IMR-90 (cell line): ENCODE measurements at regions of chr17 and their contacts with region 1.

Region 1: DNA sequence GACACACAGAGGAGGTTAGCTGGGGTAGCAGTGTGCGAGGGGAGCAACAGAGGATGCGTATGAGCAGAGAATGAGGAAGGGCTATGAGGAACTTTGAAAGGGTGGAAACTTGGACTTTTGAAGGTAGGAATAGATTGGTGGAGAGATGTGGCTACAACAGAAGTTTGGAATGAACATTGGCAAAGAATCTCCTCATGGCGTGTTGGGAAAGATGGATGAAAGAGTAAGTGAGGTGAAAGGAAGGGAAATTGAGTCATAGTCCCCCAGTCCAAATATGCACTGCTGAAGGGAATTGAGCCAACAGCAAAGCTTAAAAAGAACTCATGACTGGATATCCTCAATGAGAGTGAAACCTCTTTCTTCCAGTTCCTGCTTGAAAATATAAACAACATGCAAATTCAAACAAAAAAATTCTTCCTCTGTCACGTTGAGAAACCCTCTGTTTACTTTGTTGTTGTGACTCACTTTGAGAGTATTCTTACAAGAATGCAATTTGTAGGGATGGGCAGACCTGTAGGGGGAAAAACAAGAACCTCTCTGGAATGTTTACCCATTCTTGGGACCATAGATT is 313.2 kb upstream of the KCNJ16 start:
- DNase-seq: peak; percentile 99
- ATAC-seq: peak; percentile 80
- H3K4me3 ChIP-seq: no peak overlapping the region
- H3K27ac ChIP-seq: peak overlapping the region; percentile 99
- H3K4me1 ChIP-seq: peaks cover 20% of the 10 kb centered on the region
- H3K27me3 ChIP-seq: no peaks in the 10 kb centered on the region
- CTCF ChIP-seq: 0 out of 2 replicates have a peak, but pooled peaks have one; percentile 4
- POLR2A ChIP-seq: no peak; the same call in 1 of the 2 replicates
- RAD21 ChIP-seq: no peak

Region 2: GRCh38 chr17:69592692-69593350 is 169.0 kb before region 1 on chr17:
- CTCF ChIA-PET with region 1: no interaction called
- POLR2A ChIA-PET with region 1: no interaction called
- dilution Hi-C with region 1: no loop called
- in situ Hi-C with region 1: no loop called
- intact Hi-C with region 1: loop called (anchors 5 kb)
- DNase-seq: peak; percentile 93
- ATAC-seq: peak; percentile 94
- H3K4me3 ChIP-seq: no peak overlapping the region
- H3K27ac ChIP-seq: peak overlapping the region; percentile 99
- H3K4me1 ChIP-seq: peaks cover 16% of the 10 kb centered on the region
- H3K27me3 ChIP-seq: no peaks in the 10 kb centered on the region
- CTCF ChIP-seq: no peak
- POLR2A ChIP-seq: no peak
- RAD21 ChIP-seq: no peak

Region 3: DNA sequence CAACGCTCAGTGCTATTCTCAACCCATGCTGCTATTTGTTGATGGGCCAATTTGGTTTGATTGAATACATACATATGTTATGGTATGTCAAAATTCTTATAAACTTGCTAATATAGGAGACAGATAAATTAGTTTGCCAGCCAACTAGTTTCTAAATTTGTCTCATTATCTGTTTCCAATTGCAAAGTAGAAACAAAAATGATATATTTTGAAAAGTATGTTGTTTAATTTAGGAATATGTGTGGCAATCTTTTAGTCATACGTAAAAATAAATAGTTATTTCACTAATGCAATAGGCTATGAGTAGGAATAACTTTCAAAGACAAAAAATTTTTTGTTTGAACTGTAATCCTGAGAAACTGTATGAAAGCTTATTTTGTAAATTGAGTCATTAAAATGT is 102.6 kb after region 1 on chr17:
- CTCF ChIA-PET with region 1: no interaction called
- POLR2A ChIA-PET with region 1: no interaction called
- dilution Hi-C with region 1: no loop called
- in situ Hi-C with region 1: no loop called
- intact Hi-C with region 1: loop called (anchors 2 kb)
- DNase-seq: peak; percentile 60
- ATAC-seq: peak; percentile 84
- H3K4me3 ChIP-seq: no peak overlapping the region
- H3K27ac ChIP-seq: peak overlapping the region; percentile 27; the same call in 1 of the 2 replicates
- H3K4me1 ChIP-seq: peaks cover 13% of the 10 kb centered on the region
- H3K27me3 ChIP-seq: no peaks in the 10 kb centered on the region
- CTCF ChIP-seq: no peak
- POLR2A ChIP-seq: no peak
- RAD21 ChIP-seq: no peak

Region 4: DNA sequence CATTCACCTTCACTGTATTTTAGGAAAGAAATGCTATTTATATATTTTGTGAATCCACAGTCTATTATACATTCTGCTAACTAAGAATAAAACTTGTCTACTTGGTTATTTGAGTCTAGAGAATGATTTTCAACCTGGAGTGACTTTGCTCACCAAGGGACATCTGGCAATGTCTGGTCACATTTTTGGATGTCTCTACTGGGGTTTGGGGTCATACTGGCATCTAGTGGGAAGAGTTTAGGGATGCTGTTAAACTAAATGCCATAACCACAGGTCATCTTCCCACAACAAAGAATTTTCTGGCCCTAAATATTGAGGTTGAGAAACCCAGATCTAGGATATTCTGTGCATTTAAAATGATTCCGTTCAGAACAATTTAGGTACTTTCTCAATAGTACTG is 339.1 kb after region 1 on chr17:
- CTCF ChIA-PET with region 1: no interaction called
- POLR2A ChIA-PET with region 1: no interaction called
- dilution Hi-C with region 1: no loop called
- in situ Hi-C with region 1: no loop called
- intact Hi-C with region 1: loop called (anchors 1 kb)
- DNase-seq: no peak
- ATAC-seq: no peak
- H3K4me3 ChIP-seq: no peak overlapping the region
- H3K27ac ChIP-seq: no peak overlapping the region
- H3K4me1 ChIP-seq: no peaks in the 10 kb centered on the region; the same call in 1 of the 2 replicates
- H3K27me3 ChIP-seq: no peaks in the 10 kb centered on the region
- CTCF ChIP-seq: 0 out of 2 replicates have a peak, but pooled peaks have one; percentile 17
- POLR2A ChIP-seq: no peak
- RAD21 ChIP-seq: peak; percentile 21; the same call in 1 of the 2 replicates

Region 5: GRCh38 chr17:70168977-70169708 is 407.3 kb after region 1 on chr17 and contains the start of gene KCNJ2:
- CTCF ChIA-PET with region 1: no interaction called
- POLR2A ChIA-PET with region 1: no interaction called
- dilution Hi-C with region 1: no loop called
- in situ Hi-C with region 1: no loop called
- intact Hi-C with region 1: loop called (anchors 1 kb)
- DNase-seq: peak; percentile 79
- ATAC-seq: peak; percentile 94
- H3K4me3 ChIP-seq: peak within 1 kb of the TSS; percentile 73
- H3K27ac ChIP-seq: peak within 1 kb of the TSS; percentile 75
- H3K4me1 ChIP-seq: no peaks in the 10 kb centered on the region
- H3K27me3 ChIP-seq: no peaks in the 10 kb centered on the region
- CTCF ChIP-seq: no peak
- POLR2A ChIP-seq: peak; percentile 66; the same call in 1 of the 2 replicates
- RAD21 ChIP-seq: no peak
- total RNA-seq, gene KCNJ2: 5.8 and 8.6 TPM in 2 replicates